ENCODE measurements at regions of chr9 and their contacts with region 1.

Region 1: GRCh38 chr9:120477521-120478001 is 102.4 kb downstream of the CDK5RAP2 start:
- DNase-seq: peak; percentile 97
- H3K4me3 Mint-ChIP-seq: no peak overlapping the region
- H3K27ac Mint-ChIP-seq: no peak overlapping the region
- H3K4me1 Mint-ChIP-seq: peaks cover 23% of the 10 kb centered on the region
- H3K27me3 Mint-ChIP-seq: no peaks in the 10 kb centered on the region
- CTCF ChIP-seq: peak; percentile 82

Region 2: DNA sequence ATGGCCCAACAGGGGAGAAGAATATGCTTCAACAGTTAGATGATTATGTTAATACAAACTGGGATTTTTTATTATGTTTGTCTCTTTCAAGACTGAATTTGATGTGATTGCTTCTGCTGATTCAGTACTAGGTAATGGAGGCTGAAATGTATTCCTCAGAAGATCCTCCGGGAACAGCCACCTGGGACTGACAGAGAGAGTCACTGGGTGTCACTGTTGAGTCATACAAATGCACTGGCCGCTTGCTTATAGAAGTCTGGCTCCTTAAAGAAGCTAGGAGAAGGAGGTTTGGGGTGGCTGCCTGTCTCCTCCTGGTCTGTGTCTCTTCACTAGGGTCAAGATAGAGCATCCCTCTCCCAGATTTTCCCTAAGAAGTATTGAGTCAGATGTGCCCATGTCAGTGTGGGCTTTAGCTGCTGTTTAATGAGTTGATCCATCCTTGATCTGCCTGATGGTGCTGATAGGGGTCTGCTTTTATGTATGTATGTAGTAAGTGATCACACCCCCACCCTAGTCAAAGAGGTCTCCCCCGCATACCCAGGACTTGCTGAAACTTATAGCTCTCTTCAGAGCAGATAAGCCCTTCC is 1881.7 kb before region 1 on chr9:
- CTCF ChIA-PET with region 1: interaction called, 3 read pairs
- POLR2A ChIA-PET with region 1: no interaction called
- intact Hi-C with region 1: loop called (anchors 5 kb)
- DNase-seq: peak; percentile 73
- H3K4me3 Mint-ChIP-seq: no peak overlapping the region
- H3K27ac Mint-ChIP-seq: no peak overlapping the region
- H3K4me1 Mint-ChIP-seq: peaks cover 11% of the 10 kb centered on the region
- H3K27me3 Mint-ChIP-seq: no peaks in the 10 kb centered on the region
- CTCF ChIP-seq: peak; percentile 57

Region 3: DNA sequence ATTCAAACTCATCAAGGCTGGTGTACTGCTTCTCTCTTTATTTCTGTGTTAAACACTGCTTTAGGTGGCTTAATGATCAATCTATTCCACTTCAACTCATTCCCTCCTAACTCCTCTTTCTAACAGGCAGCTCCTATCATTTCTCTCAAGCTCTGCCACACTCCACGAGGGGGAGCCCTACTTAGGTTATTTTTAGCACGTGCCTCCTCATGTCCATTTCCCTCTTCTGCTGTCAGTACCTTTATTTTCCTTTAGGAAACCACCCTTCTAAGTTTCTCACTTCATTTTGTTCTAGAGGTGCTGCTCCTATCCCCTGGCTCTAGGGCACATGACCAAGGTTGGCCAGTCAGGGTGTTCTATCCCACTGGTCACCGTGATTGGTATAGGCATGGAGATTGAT is 1101.7 kb before region 1 on chr9:
- CTCF ChIA-PET with region 1: no interaction called
- POLR2A ChIA-PET with region 1: no interaction called
- intact Hi-C with region 1: loop called (anchors 2 kb)
- DNase-seq: peak; percentile 62
- H3K4me3 Mint-ChIP-seq: no peak overlapping the region
- H3K27ac Mint-ChIP-seq: no peak overlapping the region
- H3K4me1 Mint-ChIP-seq: no peaks in the 10 kb centered on the region
- H3K27me3 Mint-ChIP-seq: no peaks in the 10 kb centered on the region
- CTCF ChIP-seq: peak; percentile 36

Region 4: DNA sequence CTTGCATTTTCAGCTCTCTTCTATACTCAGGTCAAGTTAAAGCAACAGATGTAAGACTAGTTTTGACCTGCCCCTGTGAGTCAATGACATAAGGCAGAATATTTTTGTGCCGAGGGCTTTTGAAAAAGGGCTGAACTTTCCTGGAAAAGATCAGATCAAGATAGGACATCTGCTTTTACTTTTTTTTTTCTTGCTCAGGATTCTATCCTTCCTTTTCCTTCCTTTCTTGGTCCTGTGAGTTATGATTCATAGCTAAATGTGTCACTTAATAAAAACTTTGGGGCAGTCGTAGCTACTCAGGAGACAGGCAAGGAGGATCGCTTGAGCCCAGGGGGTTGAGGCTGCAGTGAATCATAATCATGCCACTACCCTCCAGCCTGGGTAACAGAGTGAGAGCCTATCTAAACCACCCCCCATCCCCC is 1024.1 kb before region 1 on chr9:
- CTCF ChIA-PET with region 1: no interaction called
- POLR2A ChIA-PET with region 1: no interaction called
- intact Hi-C with region 1: loop called (anchors 10 kb)
- DNase-seq: peak; percentile 66
- H3K4me3 Mint-ChIP-seq: peak overlapping the region; percentile 40
- H3K27ac Mint-ChIP-seq: peak overlapping the region; percentile 75
- H3K4me1 Mint-ChIP-seq: peaks cover 41% of the 10 kb centered on the region
- H3K27me3 Mint-ChIP-seq: no peaks in the 10 kb centered on the region
- CTCF ChIP-seq: no peak

Region 5: DNA sequence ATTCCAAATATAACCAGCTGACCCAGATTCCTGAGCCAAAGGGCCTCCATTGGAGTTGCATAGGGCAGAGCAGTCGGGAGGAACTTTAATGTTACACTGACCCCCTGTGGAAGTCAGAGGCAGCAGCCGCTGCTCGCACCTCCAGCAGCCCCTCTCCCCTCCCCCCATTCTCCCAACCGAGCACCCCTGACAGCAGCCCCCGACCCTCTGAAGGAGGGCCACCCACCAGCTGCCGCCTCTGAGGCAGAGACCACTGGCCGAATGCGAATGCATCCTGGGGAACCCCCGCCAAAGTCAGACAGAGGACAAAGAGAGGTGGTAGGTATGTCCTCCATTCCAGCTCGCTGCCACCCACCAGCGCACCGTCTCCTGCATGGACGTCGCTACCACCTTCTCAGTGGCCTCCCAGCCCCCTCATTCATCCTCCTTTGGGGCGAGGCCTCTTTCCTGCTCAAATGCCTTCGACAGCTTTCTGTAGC is 128.6 kb before region 1 on chr9:
- CTCF ChIA-PET with region 1: no interaction called
- POLR2A ChIA-PET with region 1: no interaction called
- intact Hi-C with region 1: loop called (anchors 5 kb)
- DNase-seq: peak; percentile 64
- H3K4me3 Mint-ChIP-seq: no peak overlapping the region
- H3K27ac Mint-ChIP-seq: no peak overlapping the region
- H3K4me1 Mint-ChIP-seq: peaks cover 5% of the 10 kb centered on the region
- H3K27me3 Mint-ChIP-seq: no peaks in the 10 kb centered on the region
- CTCF ChIP-seq: peak; percentile 87

Region 6: GRCh38 chr9:120464176-120464886 is 13.2 kb before region 1 on chr9:
- CTCF ChIA-PET with region 1: interaction called, 13 read pairs
- POLR2A ChIA-PET with region 1: no interaction called
- intact Hi-C with region 1: no loop called
- DNase-seq: no peak
- H3K4me3 Mint-ChIP-seq: no peak overlapping the region
- H3K27ac Mint-ChIP-seq: no peak overlapping the region
- H3K4me1 Mint-ChIP-seq: peaks cover 8% of the 10 kb centered on the region
- H3K27me3 Mint-ChIP-seq: no peaks in the 10 kb centered on the region
- CTCF ChIP-seq: no peak